Prostate gland (tissue), 2 donors: ENCODE measurements at regions of chr16 and their contacts with region 1.

Region 1: GRCh38 chr16:86519649-86520316 is 9.5 kb downstream of the FOXF1 start:
- DNase-seq: peak; percentile 32
- H3K4me3 ChIP-seq: no peak overlapping the region
- H3K27ac ChIP-seq: peak overlapping the region in 1 of 2 donors; percentile 35
- H3K4me1 ChIP-seq: no peaks in the 10 kb centered on the region
- H3K27me3 ChIP-seq: peaks cover 30% of the 10 kb centered on the region
- CTCF ChIP-seq: peak; percentile 73 to 90 (median 84)
- POLR2A ChIP-seq: no peak

Region 2: DNA sequence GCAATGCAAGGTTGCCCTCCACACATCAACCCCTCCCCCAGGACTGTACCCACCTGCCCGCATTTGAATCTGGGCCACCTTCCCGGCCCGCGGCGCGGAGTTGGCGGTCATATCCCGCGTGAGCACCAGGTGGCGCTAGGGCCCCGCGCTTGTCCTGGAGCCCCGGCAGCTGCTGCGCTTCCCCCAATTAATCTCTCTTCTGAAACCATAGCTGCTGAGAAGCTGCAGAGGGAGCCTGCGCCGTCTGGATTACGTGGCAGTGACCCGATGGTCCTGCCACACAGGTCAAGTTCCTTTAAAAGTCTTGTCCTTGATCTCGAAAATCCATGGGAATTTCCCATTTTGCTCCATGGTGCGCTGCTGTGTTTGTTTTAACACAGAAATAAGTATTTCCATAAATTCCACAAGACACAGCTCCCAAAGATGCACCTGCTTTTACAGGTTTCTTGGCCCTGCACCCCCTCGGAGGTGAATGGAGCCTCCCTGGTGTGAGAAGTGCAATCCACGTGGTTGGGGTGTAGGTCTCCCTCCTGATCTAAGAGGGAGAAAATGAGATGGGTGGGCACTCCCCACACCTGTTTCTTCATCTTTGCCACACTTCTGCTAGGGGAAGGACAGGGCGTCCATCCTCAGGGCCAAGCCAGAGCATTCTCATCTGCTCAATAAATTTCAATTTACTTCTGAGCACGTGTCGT is 698.2 kb before region 1 on chr16:
- intact Hi-C with region 1: loop called (anchors 2 kb)
- DNase-seq: peak; percentile 55
- H3K4me3 ChIP-seq: no peak overlapping the region
- H3K27ac ChIP-seq: no peak overlapping the region
- H3K4me1 ChIP-seq: no peaks in the 10 kb centered on the region
- H3K27me3 ChIP-seq: peaks cover 5% of the 10 kb centered on the region
- CTCF ChIP-seq: peak; percentile 91 to 97 (median 97)
- POLR2A ChIP-seq: no peak

Region 3: GRCh38 chr16:86016201-86016871 is 503.4 kb before region 1 on chr16:
- intact Hi-C with region 1: loop called (anchors 2 kb)
- DNase-seq: peak; percentile 20
- H3K4me3 ChIP-seq: no peak overlapping the region
- H3K27ac ChIP-seq: no peak overlapping the region
- H3K4me1 ChIP-seq: no peaks in the 10 kb centered on the region
- H3K27me3 ChIP-seq: no peaks in the 10 kb centered on the region
- CTCF ChIP-seq: peak; percentile 17 to 73 (median 71)
- POLR2A ChIP-seq: no peak

Region 4: DNA sequence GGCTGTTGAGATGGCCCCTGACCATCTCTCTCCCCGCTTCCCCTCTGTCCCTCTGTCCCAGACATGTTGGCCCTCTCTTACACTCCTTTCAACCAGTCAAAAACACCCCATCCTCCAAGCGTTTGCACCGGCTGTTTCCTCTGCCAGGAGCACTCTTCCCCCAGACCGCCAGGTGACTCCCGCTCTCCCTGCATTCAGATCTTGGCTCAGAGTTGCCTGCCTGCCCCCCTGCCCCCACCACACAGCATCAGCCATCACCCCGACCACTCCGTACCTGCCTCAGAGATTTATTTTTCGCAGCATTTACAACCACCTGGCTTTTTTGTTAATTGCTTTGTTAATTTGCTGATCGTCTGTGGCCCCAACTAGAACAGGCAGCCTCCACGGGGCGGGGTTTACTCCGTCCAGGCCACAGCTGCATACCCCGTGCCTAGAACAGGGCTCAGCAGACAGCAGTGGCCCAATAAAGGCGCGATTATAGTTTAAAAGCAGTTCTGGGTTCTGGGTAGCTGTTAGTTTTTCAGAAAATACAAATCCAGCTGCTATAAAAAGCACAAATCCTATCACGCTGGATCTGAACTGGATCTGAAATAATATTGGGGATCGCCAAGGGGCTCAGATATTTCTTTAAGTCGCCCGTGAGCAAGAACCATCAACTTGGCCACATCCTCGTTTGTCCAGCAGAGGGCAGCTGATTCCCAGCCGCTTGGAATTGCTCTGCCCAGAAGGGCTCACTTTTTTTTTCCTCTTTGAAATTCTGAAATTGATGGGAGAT is 447.3 kb before region 1 on chr16:
- intact Hi-C with region 1: loop called (anchors 2 kb)
- DNase-seq: peak; percentile 53
- H3K4me3 ChIP-seq: no peak overlapping the region
- H3K27ac ChIP-seq: no peak overlapping the region
- H3K4me1 ChIP-seq: no peaks in the 10 kb centered on the region
- H3K27me3 ChIP-seq: no peaks in the 10 kb centered on the region
- CTCF ChIP-seq: peak; percentile 47 to 75 (median 65)
- POLR2A ChIP-seq: no peak

Region 5: GRCh38 chr16:86151239-86151851 is 368.4 kb before region 1 on chr16:
- intact Hi-C with region 1: loop called (anchors 5 kb)
- DNase-seq: no peak
- H3K4me3 ChIP-seq: no peak overlapping the region
- H3K27ac ChIP-seq: peak overlapping the region; percentile 28 to 64
- H3K4me1 ChIP-seq: no peaks in the 10 kb centered on the region
- H3K27me3 ChIP-seq: peaks cover 2% of the 10 kb centered on the region
- CTCF ChIP-seq: no peak
- POLR2A ChIP-seq: no peak

Region 6: GRCh38 chr16:86343027-86343787 is 176.6 kb before region 1 on chr16:
- intact Hi-C with region 1: loop called (anchors 2 kb)
- DNase-seq: peak; percentile 72
- H3K4me3 ChIP-seq: no peak overlapping the region
- H3K27ac ChIP-seq: peak overlapping the region; percentile 73 to 80
- H3K4me1 ChIP-seq: no peaks in the 10 kb centered on the region
- H3K27me3 ChIP-seq: no peaks in the 10 kb centered on the region
- CTCF ChIP-seq: no peak
- POLR2A ChIP-seq: no peak